ENCODE measurements at regions of chr2 and their contacts with region 1.

Region 1: DNA sequence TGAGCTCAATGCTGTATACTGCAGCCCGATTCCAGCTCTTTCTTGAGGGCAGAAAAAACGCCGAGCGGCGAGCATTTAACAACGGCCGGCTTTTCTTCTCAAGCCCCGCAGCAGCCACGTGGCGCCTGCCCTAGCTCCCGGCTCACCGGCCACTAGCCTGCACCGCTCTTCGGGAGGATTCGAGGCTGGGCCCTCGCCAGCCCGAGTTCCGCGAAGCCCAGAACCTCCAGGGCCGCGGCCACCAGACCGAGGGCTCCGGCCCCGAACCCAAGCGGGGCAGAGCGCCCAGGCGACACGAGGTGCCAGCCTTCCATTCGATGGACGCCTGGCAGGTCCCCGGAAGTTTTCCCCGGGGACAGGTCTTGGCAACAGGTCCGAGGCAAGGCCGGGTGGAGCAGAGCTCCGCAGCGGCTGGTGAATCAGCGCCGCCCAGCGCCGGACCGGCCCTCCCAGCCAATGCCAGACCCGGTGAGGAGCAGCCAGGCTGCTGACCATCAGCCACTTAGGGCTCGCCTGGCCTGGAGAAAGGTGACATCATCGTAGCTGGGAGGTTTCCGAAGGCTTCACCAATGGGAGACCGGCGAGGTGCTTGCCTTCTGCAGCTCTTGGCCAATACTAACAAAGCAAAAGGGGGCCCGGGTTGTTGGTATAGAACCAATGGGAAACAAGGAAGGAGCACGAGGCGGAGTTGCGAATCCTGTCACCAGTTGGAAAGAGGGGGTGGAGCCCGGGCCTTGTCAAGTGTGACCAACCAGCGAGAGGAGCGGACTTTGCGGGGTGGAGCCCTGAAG is 544 bp upstream of the MXD1 start:
- DNase-seq: peak; percentile 100
- H3K4me3 ChIP-seq: peak overlapping the region; percentile 17 to 98 (median 68)
- H3K4me3 Mint-ChIP-seq: peak overlapping the region; percentile 86
- H3K27ac ChIP-seq: peak overlapping the region; percentile 92 to 97
- H3K27ac Mint-ChIP-seq: peak overlapping the region; percentile 91 to 96 (median 95)
- H3K4me1 ChIP-seq: peaks cover 37 to 49% of the 10 kb centered on the region in 2 donors
- H3K4me1 Mint-ChIP-seq: peaks cover 29% of the 10 kb centered on the region
- H3K27me3 ChIP-seq: no peaks in the 10 kb centered on the region
- H3K27me3 Mint-ChIP-seq: no peaks in the 10 kb centered on the region
- CTCF ChIP-seq: no peak

Region 2: GRCh38 chr2:69946351-69947077 is 32.1 kb after region 1 on chr2:
- intact Hi-C with region 1: loop called in 1 of 2 experiments (anchors 5 kb)
- DNase-seq: peak; percentile 63 to 82 (median 81)
- H3K4me3 ChIP-seq: peak overlapping the region in 1 of 3 experiments; percentile 53
- H3K4me3 Mint-ChIP-seq: peak overlapping the region; percentile 51
- H3K27ac ChIP-seq: peak overlapping the region; percentile 71 to 92
- H3K27ac Mint-ChIP-seq: peak overlapping the region; percentile 94 to 98 (median 97)
- H3K4me1 ChIP-seq: peaks cover 61 to 65% of the 10 kb centered on the region in 2 donors
- H3K4me1 Mint-ChIP-seq: peaks cover 67% of the 10 kb centered on the region
- H3K27me3 ChIP-seq: no peaks in the 10 kb centered on the region
- H3K27me3 Mint-ChIP-seq: no peaks in the 10 kb centered on the region
- CTCF ChIP-seq: no peak

Region 3: GRCh38 chr2:70009762-70010575 is 95.6 kb after region 1 on chr2:
- intact Hi-C with region 1: no loop called
- DNase-seq: peak; percentile 87 to 96 (median 90)
- H3K4me3 ChIP-seq: no peak overlapping the region
- H3K4me3 Mint-ChIP-seq: peak overlapping the region; percentile 31 to 67
- H3K27ac ChIP-seq: peak overlapping the region; percentile 61 to 86
- H3K27ac Mint-ChIP-seq: peak overlapping the region; percentile 84 to 98 (median 94)
- H3K4me1 ChIP-seq: peaks cover 22 to 25% of the 10 kb centered on the region in 2 donors
- H3K4me1 Mint-ChIP-seq: peaks cover 28% of the 10 kb centered on the region
- H3K27me3 ChIP-seq: no peaks in the 10 kb centered on the region
- H3K27me3 Mint-ChIP-seq: peaks cover 0 to 2% (median 0%) of the 10 kb centered on the region in 3 donors
- CTCF ChIP-seq: no peak

Region 4: DNA sequence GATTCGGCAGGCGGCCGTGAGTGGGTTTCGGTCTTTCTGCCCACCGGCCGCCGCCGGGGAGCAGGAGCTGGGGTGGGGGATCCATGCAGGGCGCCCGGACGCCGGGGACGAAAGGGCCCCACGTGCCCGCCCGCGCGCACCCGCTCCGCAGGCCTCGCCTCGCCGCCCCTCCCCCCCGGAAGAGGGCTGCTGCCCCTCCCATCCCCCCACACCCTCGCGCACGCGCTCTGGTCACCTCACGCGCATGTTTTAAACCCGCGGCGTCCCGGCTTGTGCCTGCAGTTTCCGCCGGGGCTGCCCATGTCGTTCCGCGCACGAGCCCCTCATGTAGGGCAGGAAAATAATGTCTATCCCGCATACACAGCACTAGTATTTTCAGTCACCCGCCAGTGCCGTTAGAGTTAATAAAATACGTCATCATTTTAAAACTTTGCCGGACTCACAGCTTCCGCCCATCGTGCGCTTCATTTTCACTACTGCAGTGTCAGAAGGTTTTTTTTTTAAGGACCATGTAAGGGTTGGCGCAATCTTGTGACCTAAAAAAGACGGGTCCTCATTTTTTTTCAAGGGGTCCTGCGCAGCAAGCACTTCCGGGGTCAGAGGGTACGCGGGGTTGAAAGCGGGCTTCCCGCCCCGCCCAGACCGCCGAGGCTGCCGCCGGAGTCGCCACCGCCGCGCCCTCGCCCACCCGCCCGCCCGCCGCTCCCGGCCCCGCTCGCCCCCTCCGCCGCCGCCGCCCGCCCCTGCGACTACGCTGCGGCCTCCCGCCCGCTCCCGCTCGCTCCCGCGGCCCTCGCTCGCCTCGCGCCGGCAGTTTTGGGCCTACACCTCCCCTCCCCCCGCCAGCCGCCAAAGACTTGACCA is 172.7 kb after region 1 on chr2 and contains the start of gene PCBP1:
- intact Hi-C with region 1: loop called (anchors 5 kb)
- DNase-seq: peak; percentile 87 to 93 (median 93)
- H3K4me3 ChIP-seq: peak within 1 kb of the TSS; percentile 94 to 100 (median 95)
- H3K4me3 Mint-ChIP-seq: peak within 1 kb of the TSS; percentile 98 to 99
- H3K27ac ChIP-seq: peak within 1 kb of the TSS; percentile 99
- H3K27ac Mint-ChIP-seq: peak within 1 kb of the TSS; percentile 100
- H3K4me1 ChIP-seq: peaks cover 55 to 67% of the 10 kb centered on the region in 2 donors
- H3K4me1 Mint-ChIP-seq: peaks cover 56% of the 10 kb centered on the region
- H3K27me3 ChIP-seq: no peaks in the 10 kb centered on the region
- H3K27me3 Mint-ChIP-seq: peaks cover 0 to 5% (median 0%) of the 10 kb centered on the region in 3 donors
- CTCF ChIP-seq: no peak
- polyA plus RNA-seq, gene PCBP1: 178 to 299 (median 194) TPM

Region 5: DNA sequence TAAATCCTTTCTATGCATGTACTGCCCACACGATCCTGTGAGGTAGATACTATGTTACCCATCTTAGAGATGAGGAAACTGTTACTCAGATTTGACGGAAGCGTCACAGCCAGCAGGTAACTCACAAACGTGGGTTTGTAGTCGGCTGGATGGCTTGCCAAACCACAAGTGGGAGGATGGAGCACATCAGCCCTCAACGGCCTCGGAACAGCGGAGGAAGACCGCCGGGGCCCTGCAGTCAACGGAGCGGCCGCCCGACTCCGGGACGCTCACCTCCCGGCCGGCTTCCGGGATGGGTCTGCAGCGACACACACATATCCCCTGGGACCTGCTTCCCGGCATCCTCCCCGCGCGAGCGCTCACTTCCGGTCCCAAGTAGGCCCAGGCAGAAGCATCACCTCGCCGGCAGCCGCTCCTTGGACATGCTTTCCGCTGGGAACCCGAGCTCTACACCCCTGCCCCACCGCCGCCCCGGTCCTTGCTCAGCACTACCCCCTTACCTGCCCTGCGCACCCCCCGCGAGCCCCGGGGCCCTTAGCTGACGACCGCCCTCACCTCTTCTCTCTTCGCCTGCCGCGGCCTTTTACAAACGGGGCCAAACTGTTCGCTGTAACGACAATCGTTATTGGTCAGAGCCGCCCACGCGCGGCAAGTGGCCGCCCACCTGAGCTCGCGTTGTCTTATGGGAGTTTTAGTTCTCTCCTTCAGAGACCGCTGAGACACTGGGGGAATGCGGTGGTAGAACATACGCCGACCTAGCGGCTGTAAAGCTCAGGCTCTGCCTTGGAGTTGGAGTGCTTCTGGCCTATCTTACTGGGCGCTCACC is 276.3 kb after region 1 on chr2 and contains the start of gene C2orf42:
- intact Hi-C with region 1: loop called in 1 of 2 experiments (anchors 5 kb)
- DNase-seq: peak; percentile 90 to 95 (median 94)
- H3K4me3 ChIP-seq: peak within 1 kb of the TSS; percentile 84 to 98 (median 96)
- H3K4me3 Mint-ChIP-seq: peak within 1 kb of the TSS; percentile 84 to 94
- H3K27ac ChIP-seq: peak within 1 kb of the TSS; percentile 89 to 94
- H3K27ac Mint-ChIP-seq: peak within 1 kb of the TSS; percentile 90 to 99 (median 98)
- H3K4me1 ChIP-seq: peaks cover 12 to 17% of the 10 kb centered on the region in 2 donors
- H3K4me1 Mint-ChIP-seq: peaks cover 14% of the 10 kb centered on the region
- H3K27me3 ChIP-seq: no peaks in the 10 kb centered on the region
- H3K27me3 Mint-ChIP-seq: peaks cover 0 to 4% (median 2%) of the 10 kb centered on the region in 3 donors
- CTCF ChIP-seq: no peak
- polyA plus RNA-seq, gene C2orf42: 3.0 to 5.5 (median 4.0) TPM